Activated T-helper 1 cell treated with anti-CD3 and anti-CD28 coated beads, Interleukin-12 subunit alpha, Interleukin-12 subunit beta, Interleukin-2, Interleukin-4 antibody, amounts not matched to agents 30 ng/mL and 10 ng/mL and 1 ng/mL, durations not matched to agents 14 hours and 24 hours and 36 hours (primary cell): ENCODE measurements at regions of chrX and their contacts with region 1.

Region 1: GRCh38 chrX:129982274-129983251 is at the start of gene BCORL1:
- DNase-seq: peak; percentile 77
- H3K4me3 Mint-ChIP-seq: peak within 1 kb of the TSS; percentile 81
- H3K27ac Mint-ChIP-seq: peak within 1 kb of the TSS; percentile 23
- H3K4me1 Mint-ChIP-seq: peaks cover 16% of the 10 kb centered on the region
- H3K27me3 Mint-ChIP-seq: peaks cover 15% of the 10 kb centered on the region
- total RNA-seq, gene BCORL1: 8.8 and 9.3 TPM in 2 replicates

Region 2: GRCh38 chrX:129781134-129781672 is 201.4 kb before region 1 on chrX:
- intact Hi-C with region 1: loop called (anchors 5 kb)
- DNase-seq: peak; percentile 65
- H3K4me3 Mint-ChIP-seq: peak overlapping the region; percentile 87
- H3K27ac Mint-ChIP-seq: peak overlapping the region; percentile 91
- H3K4me1 Mint-ChIP-seq: peaks cover 63% of the 10 kb centered on the region
- H3K27me3 Mint-ChIP-seq: no peaks in the 10 kb centered on the region

Region 3: GRCh38 chrX:129905787-129906580 is 76.6 kb before region 1 on chrX and contains the start of gene UTP14A:
- intact Hi-C with region 1: loop called (anchors 1 kb)
- DNase-seq: peak; percentile 81
- H3K4me3 Mint-ChIP-seq: peak within 1 kb of the TSS; percentile 96
- H3K27ac Mint-ChIP-seq: peak within 1 kb of the TSS; percentile 92
- H3K4me1 Mint-ChIP-seq: peaks cover 11% of the 10 kb centered on the region
- H3K27me3 Mint-ChIP-seq: no peaks in the 10 kb centered on the region
- total RNA-seq, gene UTP14A: 59.3 and 62.4 TPM in 2 replicates

Region 4: GRCh38 chrX:129957241-129958082 is 25.1 kb before region 1 on chrX:
- intact Hi-C with region 1: loop called (anchors 1 kb)
- DNase-seq: peak; percentile 41
- H3K4me3 Mint-ChIP-seq: peak overlapping the region; percentile 51
- H3K27ac Mint-ChIP-seq: no peak overlapping the region
- H3K4me1 Mint-ChIP-seq: peaks cover 19% of the 10 kb centered on the region
- H3K27me3 Mint-ChIP-seq: peaks cover 8% of the 10 kb centered on the region

Region 5: DNA sequence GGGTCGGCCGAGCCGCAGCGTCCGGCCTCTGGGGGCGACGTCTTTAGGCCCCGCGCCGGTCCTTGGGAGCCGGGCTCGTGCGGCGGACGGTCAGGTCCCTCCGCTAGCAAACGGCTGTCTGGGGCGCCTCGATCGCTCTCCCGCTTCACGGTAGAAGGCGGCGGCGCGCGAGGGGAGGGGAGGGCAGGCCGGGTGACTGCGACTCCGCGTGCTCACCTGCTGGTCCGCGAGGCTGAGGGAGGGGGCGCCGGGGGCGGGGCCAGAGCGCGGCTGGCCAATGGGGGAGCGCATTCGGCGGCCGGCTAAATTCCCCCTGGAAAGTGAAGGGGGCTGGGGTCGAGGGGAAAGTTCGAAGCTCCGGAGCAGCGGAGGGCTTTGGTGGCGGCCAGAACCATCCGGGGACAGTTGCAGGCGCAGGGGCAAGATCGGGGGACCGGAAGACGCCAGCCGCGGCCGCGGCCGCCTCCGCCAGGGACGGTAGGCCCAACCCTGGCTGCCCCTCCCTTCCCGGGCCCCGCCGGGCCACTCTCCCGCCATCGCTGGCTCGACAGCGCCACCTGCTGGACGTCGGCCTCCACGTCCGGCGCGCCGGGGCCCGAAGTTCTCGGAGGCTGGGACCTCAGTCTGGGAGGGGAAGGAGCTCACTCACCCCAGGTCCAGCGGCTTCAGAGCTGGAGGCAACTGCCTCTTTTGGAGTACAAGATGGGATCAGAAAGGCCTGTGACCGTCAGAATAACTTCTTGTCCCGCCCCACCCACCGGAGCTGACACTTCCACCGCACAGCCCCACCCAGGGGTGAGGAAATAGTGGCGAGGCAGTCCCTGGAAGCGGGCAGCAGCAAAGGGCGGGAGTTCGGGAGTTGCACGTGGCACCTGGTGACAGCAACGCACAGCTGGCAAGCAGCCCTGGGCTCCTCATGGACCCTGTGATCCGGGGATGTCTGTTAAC is 77.8 kb after region 1 on chrX:
- intact Hi-C with region 1: loop called (anchors 1 kb)
- DNase-seq: peak; percentile 78
- H3K4me3 Mint-ChIP-seq: peak overlapping the region; percentile 73
- H3K27ac Mint-ChIP-seq: peak overlapping the region; percentile 44
- H3K4me1 Mint-ChIP-seq: no peaks in the 10 kb centered on the region
- H3K27me3 Mint-ChIP-seq: peaks cover 2% of the 10 kb centered on the region

Region 6: GRCh38 chrX:130268500-130269170 is 286.1 kb after region 1 on chrX and contains the start of gene ZNF280C:
- intact Hi-C with region 1: loop called (anchors 5 kb)
- DNase-seq: peak; percentile 85
- H3K4me3 Mint-ChIP-seq: peak within 1 kb of the TSS; percentile 92
- H3K27ac Mint-ChIP-seq: peak within 1 kb of the TSS; percentile 91
- H3K4me1 Mint-ChIP-seq: peaks cover 19% of the 10 kb centered on the region
- H3K27me3 Mint-ChIP-seq: peaks cover 2% of the 10 kb centered on the region
- total RNA-seq, gene ZNF280C: 7.4 and 7.6 TPM in 2 replicates

Region 7: GRCh38 chrX:130902783-130903613 is 920.4 kb after region 1 on chrX and contains the start of gene ENOX2:
- intact Hi-C with region 1: loop called (anchors 5 kb)
- DNase-seq: peak; percentile 83
- H3K4me3 Mint-ChIP-seq: no peak within 1 kb of the TSS
- H3K27ac Mint-ChIP-seq: peak within 1 kb of the TSS; percentile 83
- H3K4me1 Mint-ChIP-seq: peaks cover 9% of the 10 kb centered on the region
- H3K27me3 Mint-ChIP-seq: peaks cover 5% of the 10 kb centered on the region
- total RNA-seq, gene ENOX2: 15.6 and 20.5 TPM in 2 replicates